ENCODE measurements at regions of chrX and their contacts with region 1.

Region 1: GRCh38 chrX:104195489-104196084 is 29.3 kb downstream of the FAM199X start:
- DNase-seq: peak; percentile 25
- ATAC-seq: peak; percentile 79; the same call in 1 of the 2 replicates
- H3K4me3 ChIP-seq: no peak overlapping the region
- H3K27ac ChIP-seq: no peak overlapping the region
- H3K4me1 ChIP-seq: no peaks in the 10 kb centered on the region
- H3K27me3 ChIP-seq: no peaks in the 10 kb centered on the region
- CTCF ChIP-seq: peak; percentile 72
- POLR2A ChIP-seq: no peak
- RAD21 ChIP-seq: peak; percentile 57

Region 2: GRCh38 chrX:104270920-104271512 is 75.4 kb after region 1 on chrX:
- CTCF ChIA-PET with region 1: no interaction called
- POLR2A ChIA-PET with region 1: no interaction called
- dilution Hi-C with region 1: no loop called
- in situ Hi-C with region 1: no loop called
- intact Hi-C with region 1: loop called (anchors 1 kb)
- DNase-seq: peak; percentile 22
- ATAC-seq: peak; percentile 42; the same call in 1 of the 2 replicates
- H3K4me3 ChIP-seq: peak overlapping the region; percentile 29; the same call in 1 of the 2 replicates
- H3K27ac ChIP-seq: no peak overlapping the region
- H3K4me1 ChIP-seq: no peaks in the 10 kb centered on the region
- H3K27me3 ChIP-seq: peaks cover 21% of the 10 kb centered on the region
- CTCF ChIP-seq: peak; percentile 62
- POLR2A ChIP-seq: no peak
- RAD21 ChIP-seq: peak; percentile 45

Region 3: GRCh38 chrX:104343428-104344129 is 148.0 kb after region 1 on chrX:
- CTCF ChIA-PET with region 1: no interaction called
- POLR2A ChIA-PET with region 1: no interaction called
- dilution Hi-C with region 1: no loop called
- in situ Hi-C with region 1: no loop called
- intact Hi-C with region 1: loop called (anchors 10 kb)
- DNase-seq: peak; percentile 74
- ATAC-seq: peak; percentile 88
- H3K4me3 ChIP-seq: no peak overlapping the region
- H3K27ac ChIP-seq: no peak overlapping the region
- H3K4me1 ChIP-seq: no peaks in the 10 kb centered on the region
- H3K27me3 ChIP-seq: peaks cover 12% of the 10 kb centered on the region
- CTCF ChIP-seq: peak; percentile 69
- POLR2A ChIP-seq: no peak
- RAD21 ChIP-seq: peak; percentile 70

Region 4: GRCh38 chrX:105190252-105190853 is 994.8 kb after region 1 on chrX:
- CTCF ChIA-PET with region 1: no interaction called
- POLR2A ChIA-PET with region 1: no interaction called
- dilution Hi-C with region 1: no loop called
- in situ Hi-C with region 1: no loop called
- intact Hi-C with region 1: loop called (anchors 10 kb)
- DNase-seq: peak; percentile 6
- ATAC-seq: no peak
- H3K4me3 ChIP-seq: no peak overlapping the region
- H3K27ac ChIP-seq: no peak overlapping the region
- H3K4me1 ChIP-seq: no peaks in the 10 kb centered on the region
- H3K27me3 ChIP-seq: peaks cover 3% of the 10 kb centered on the region
- CTCF ChIP-seq: peak; percentile 68
- POLR2A ChIP-seq: no peak
- RAD21 ChIP-seq: no peak; the same call in 1 of the 2 replicates